ENCODE measurements at regions of chr6 and their contacts with region 1.

Region 1: GRCh38 chr6:150343434-150343833 is 25.4 kb upstream of the IYD start:
- DNase-seq: no peak
- ATAC-seq: no peak
- H3K4me3 Mint-ChIP-seq: no peak overlapping the region
- H3K27ac Mint-ChIP-seq: no peak overlapping the region
- H3K4me1 Mint-ChIP-seq: no peaks in the 10 kb centered on the region
- H3K27me3 Mint-ChIP-seq: peaks cover 14% of the 10 kb centered on the region
- CTCF ChIP-seq: no peak

Region 2: GRCh38 chr6:149834513-149835481 is 508.6 kb before region 1 on chr6:
- CTCF ChIA-PET with region 1: no interaction called
- POLR2A ChIA-PET with region 1: no interaction called
- intact Hi-C with region 1: no loop called
- DNase-seq: peak; percentile 82
- ATAC-seq: peak; percentile 76
- H3K4me3 Mint-ChIP-seq: no peak overlapping the region
- H3K27ac Mint-ChIP-seq: no peak overlapping the region
- H3K4me1 Mint-ChIP-seq: no peaks in the 10 kb centered on the region
- H3K27me3 Mint-ChIP-seq: peaks cover 2% of the 10 kb centered on the region
- CTCF ChIP-seq: peak; percentile 91

Region 3: DNA sequence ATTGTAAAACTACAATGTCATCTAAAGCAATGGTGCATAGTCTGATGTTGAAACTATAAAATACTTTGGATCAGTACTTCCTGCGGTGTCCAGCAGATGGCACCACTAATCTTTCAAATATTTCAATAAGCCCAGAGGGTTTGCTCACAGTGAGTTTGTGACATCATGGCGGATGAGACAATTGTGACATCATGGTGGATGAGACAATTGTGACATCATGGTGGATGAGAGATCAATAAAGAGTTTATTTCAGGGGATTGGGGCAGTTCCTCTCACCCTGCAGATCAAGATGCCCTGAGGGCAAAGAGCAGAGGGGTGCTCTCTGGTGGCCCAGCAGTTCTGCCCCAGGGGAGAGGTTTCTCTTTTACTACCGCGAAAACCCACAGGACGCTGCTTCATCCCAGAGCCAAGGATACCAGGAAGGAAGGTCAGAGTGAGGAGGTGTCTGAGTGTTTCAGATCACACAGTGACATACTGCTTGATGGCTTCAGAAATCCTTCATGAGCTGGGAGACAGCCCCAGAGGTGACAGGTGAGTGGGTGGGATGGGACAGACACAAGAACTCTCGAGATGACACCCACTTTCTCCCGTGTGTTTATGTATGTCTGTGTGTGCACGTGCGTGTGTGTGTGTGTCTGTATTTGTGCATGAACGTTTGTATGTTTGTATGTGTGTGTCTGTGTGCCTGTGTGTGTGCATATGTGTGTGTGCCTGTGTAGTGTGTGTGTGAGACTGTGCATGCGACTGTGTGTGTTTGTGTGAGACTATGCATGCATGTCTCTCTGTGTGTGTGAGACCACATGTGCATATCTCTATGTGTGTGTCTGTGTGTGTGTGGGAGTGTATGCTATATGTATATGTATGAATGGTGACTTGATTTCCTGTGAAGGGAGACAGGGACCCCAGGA is 408.9 kb before region 1 on chr6:
- CTCF ChIA-PET with region 1: no interaction called
- POLR2A ChIA-PET with region 1: no interaction called
- intact Hi-C with region 1: loop called (anchors 10 kb)
- DNase-seq: peak; percentile 89
- ATAC-seq: peak; percentile 53
- H3K4me3 Mint-ChIP-seq: no peak overlapping the region
- H3K27ac Mint-ChIP-seq: no peak overlapping the region
- H3K4me1 Mint-ChIP-seq: peaks cover 19% of the 10 kb centered on the region
- H3K27me3 Mint-ChIP-seq: peaks cover 71% of the 10 kb centered on the region
- CTCF ChIP-seq: peak; percentile 79

Region 4: GRCh38 chr6:150079604-150080003 is 263.8 kb before region 1 on chr6:
- CTCF ChIA-PET with region 1: interaction called, 19 read pairs
- POLR2A ChIA-PET with region 1: no interaction called
- intact Hi-C with region 1: no loop called
- DNase-seq: peak; percentile 49
- ATAC-seq: peak; percentile 70
- H3K4me3 Mint-ChIP-seq: no peak overlapping the region
- H3K27ac Mint-ChIP-seq: no peak overlapping the region
- H3K4me1 Mint-ChIP-seq: peaks cover 20% of the 10 kb centered on the region
- H3K27me3 Mint-ChIP-seq: peaks cover 16% of the 10 kb centered on the region
- CTCF ChIP-seq: no peak

Region 5: DNA sequence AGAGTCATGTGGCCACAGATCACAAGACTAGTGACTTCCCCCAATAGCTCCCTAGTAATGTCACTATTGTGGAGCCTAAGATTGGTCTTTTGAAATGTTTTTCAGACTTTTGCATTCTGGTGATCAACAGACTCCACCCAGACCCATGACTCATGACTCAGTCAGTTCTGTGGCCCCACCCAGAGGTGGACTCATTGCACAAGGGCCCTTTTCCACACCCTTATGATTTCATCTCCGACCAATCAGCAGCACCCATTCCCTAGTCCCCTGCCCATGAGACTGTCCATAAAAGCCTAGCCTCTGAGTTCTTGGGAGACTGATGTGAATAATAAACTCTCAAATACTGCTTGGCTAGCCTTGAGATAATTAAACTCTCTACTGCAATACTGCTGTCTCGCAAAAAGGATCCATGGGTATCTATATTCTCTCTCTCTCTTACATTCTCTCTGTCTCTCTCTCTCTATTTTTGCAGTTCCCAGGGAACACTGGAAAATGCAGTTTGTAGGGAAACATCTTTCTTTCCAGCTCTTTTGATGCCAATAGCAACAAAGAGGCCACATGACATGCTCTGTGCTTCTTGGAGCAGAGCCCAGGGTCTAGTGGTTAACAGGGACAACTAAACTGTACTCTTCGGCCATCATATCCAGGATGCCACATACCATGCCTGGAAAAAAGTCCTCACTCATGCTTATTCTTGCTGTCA is 46.0 kb before region 1 on chr6:
- CTCF ChIA-PET with region 1: no interaction called
- POLR2A ChIA-PET with region 1: no interaction called
- intact Hi-C with region 1: no loop called
- DNase-seq: no peak
- ATAC-seq: no peak
- H3K4me3 Mint-ChIP-seq: no peak overlapping the region
- H3K27ac Mint-ChIP-seq: no peak overlapping the region
- H3K4me1 Mint-ChIP-seq: peaks cover 12% of the 10 kb centered on the region
- H3K27me3 Mint-ChIP-seq: peaks cover 9% of the 10 kb centered on the region
- CTCF ChIP-seq: no peak

Region 6: DNA sequence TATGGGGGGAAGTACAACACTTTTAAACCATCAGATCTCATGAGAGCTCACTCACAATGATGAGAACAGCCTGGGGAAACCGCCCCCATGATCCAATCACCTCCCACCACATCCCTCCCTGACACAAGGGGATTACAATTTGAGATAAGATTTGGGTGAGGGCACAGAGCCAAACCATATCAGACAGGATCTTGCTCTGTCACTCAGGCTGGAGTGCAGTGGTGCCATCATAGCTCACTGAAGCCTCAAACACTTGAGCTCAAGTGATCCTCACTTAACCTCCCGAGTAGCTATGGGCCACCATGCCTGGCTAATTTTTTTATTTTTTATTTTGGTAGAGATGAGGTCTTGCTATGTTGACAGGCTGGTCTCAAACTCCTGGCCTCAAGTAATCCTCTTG is 20.3 kb after region 1 on chr6:
- CTCF ChIA-PET with region 1: no interaction called
- POLR2A ChIA-PET with region 1: no interaction called
- intact Hi-C with region 1: no loop called
- DNase-seq: no peak
- ATAC-seq: no peak
- H3K4me3 Mint-ChIP-seq: no peak overlapping the region
- H3K27ac Mint-ChIP-seq: no peak overlapping the region
- H3K4me1 Mint-ChIP-seq: no peaks in the 10 kb centered on the region
- H3K27me3 Mint-ChIP-seq: peaks cover 3% of the 10 kb centered on the region
- CTCF ChIP-seq: no peak